ENCODE measurements at regions of chr1 and their contacts with region 1.

Region 1: DNA sequence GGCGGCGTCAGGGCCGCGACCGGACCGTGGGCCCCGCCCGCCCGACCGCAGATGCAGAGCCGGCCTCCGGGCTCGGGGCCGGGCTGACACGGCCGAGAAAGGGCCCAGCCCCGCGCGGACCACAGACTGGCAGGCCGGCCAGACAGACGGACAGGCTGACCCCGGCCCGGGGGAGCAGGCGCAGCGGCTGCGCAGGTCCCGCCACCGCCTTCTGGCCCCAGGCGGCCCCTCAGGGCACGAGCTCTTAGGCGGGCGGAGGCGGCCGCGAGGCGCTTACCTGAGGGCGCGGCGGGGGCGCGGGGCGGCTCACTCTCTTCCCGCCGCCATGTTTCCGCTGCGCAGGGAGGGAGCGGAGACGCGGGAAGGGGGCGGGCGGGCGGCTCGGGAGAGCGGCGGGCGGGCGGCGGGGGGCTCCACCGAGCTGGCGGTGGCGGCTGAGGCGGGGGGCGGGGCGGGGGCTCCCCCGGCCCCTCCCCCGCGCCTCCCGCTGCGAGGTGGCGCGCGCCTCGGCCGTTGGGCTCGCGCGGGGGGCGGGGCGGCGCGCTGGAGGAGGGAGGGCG is at the start of gene SCMH1:
- DNase-seq: peak; percentile 12
- ATAC-seq: peak; percentile 78
- H3K4me3 ChIP-seq: peak within 1 kb of the TSS; percentile 88
- H3K27ac ChIP-seq: peak within 1 kb of the TSS; percentile 82
- H3K4me1 ChIP-seq: peaks cover 7% of the 10 kb centered on the region
- H3K27me3 ChIP-seq: no peaks in the 10 kb centered on the region
- CTCF ChIP-seq: no peak
- POLR2A ChIP-seq: no peak; the same call in 1 of the 2 replicates
- RAD21 ChIP-seq: no peak
- total RNA-seq, gene SCMH1: 9.0 and 9.7 TPM in 2 replicates

Region 2: DNA sequence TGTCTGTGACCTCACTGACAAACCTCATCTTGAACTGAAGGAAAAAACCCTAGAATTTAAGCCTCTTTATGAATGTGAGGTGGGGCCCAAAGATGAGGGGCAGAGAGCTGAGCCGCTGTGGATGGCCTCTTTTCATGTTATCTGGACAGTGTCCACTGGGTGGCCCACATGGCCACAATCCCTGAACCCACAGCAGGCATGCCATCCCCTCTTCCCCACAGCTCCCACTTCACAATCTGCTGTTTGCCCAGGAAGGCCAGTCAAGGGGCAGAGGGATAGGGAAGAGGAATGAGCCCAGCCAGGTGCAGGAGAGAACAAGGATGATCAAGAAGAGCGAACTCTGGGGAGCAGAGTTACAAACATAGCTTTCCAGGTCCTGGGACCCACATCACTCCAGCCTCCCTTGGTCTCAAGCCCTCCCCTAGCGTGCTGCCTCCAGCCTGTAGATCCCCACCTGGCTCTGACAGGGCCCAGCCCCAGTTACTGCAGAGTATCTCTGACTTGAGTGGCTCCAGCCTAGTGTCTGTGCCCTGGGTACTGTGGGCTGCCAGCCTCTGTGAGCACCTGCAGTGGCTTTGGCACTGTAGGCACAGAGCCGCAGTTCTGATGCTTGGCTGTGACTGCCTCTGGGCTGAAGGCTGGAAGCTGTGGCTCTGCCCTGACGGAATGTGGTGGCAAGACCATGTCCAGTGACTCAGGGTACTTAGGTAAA is 218.4 kb before region 1 on chr1:
- CTCF ChIA-PET with region 1: no interaction called
- POLR2A ChIA-PET with region 1: no interaction called
- dilution Hi-C with region 1: no loop called
- in situ Hi-C with region 1: no loop called
- intact Hi-C with region 1: loop called (anchors 1 kb)
- DNase-seq: no peak
- ATAC-seq: peak; percentile 57
- H3K4me3 ChIP-seq: no peak overlapping the region
- H3K27ac ChIP-seq: no peak overlapping the region
- H3K4me1 ChIP-seq: peaks cover 5% of the 10 kb centered on the region
- H3K27me3 ChIP-seq: no peaks in the 10 kb centered on the region
- CTCF ChIP-seq: peak; percentile 40
- POLR2A ChIP-seq: no peak
- RAD21 ChIP-seq: peak; percentile 56

Region 3: DNA sequence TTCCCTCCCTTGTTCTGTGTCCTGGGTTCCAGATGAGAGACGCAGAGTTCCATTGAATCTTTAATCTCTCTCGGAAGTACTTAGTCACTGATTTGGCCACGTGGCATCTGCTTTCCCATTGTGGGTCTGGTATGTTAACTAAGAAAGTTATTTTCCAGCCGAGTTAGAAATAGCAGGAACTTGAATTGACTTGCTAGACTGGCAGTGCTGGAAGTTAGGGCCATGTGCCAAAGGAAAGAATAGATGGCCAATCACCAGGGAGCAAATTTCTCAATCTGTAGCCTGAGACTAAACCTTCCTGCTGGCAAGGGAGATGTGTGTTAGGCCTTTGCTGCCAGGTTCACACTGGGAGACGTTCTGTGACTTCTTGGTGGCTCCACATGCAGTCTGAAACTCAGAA is 196.1 kb before region 1 on chr1:
- CTCF ChIA-PET with region 1: no interaction called
- POLR2A ChIA-PET with region 1: no interaction called
- dilution Hi-C with region 1: no loop called
- in situ Hi-C with region 1: no loop called
- intact Hi-C with region 1: loop called (anchors 5 kb)
- DNase-seq: peak; percentile 38
- ATAC-seq: peak; percentile 24; the same call in 1 of the 2 replicates
- H3K4me3 ChIP-seq: no peak overlapping the region
- H3K27ac ChIP-seq: no peak overlapping the region
- H3K4me1 ChIP-seq: peaks cover 2% of the 10 kb centered on the region; the same call in 1 of the 2 replicates
- H3K27me3 ChIP-seq: no peaks in the 10 kb centered on the region
- CTCF ChIP-seq: no peak
- POLR2A ChIP-seq: no peak
- RAD21 ChIP-seq: no peak

Region 4: DNA sequence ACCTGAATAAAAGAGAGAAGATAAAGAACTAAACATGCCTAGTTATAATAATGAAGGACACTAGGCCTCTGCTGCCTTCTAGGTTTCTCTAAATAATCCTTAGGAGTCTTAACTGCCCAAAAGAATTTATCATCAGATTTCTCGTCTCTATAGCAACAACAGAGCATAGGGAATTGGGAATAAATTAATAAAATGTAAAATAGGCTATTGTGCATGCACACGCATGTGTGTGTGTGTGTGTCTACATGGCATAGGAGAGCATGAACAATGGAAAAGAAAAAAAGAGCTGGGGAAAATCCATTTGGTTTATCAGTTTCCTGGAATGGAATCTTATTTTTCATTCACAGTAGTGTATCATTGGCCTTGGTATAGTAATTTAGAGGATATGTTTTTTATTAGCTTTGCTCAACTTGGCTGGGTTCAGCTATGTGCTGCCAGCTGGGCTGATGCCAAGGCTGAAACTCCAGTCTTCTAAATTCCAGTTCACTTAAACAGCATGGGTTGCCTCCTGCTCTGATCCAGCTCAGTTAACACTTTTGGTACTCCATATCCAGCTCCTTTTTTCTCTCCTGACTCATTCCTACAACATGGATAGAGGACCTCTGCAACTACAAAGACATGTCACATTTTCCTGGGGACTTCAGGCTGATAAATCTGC is 139.8 kb before region 1 on chr1:
- CTCF ChIA-PET with region 1: no interaction called
- POLR2A ChIA-PET with region 1: no interaction called
- dilution Hi-C with region 1: no loop called
- in situ Hi-C with region 1: no loop called
- intact Hi-C with region 1: loop called (anchors 5 kb)
- DNase-seq: peak; percentile 97
- ATAC-seq: peak; percentile 95
- H3K4me3 ChIP-seq: no peak overlapping the region
- H3K27ac ChIP-seq: no peak overlapping the region; the same call in 1 of the 2 replicates
- H3K4me1 ChIP-seq: peaks cover 5% of the 10 kb centered on the region
- H3K27me3 ChIP-seq: no peaks in the 10 kb centered on the region
- CTCF ChIP-seq: no peak
- POLR2A ChIP-seq: no peak
- RAD21 ChIP-seq: no peak

Region 5: DNA sequence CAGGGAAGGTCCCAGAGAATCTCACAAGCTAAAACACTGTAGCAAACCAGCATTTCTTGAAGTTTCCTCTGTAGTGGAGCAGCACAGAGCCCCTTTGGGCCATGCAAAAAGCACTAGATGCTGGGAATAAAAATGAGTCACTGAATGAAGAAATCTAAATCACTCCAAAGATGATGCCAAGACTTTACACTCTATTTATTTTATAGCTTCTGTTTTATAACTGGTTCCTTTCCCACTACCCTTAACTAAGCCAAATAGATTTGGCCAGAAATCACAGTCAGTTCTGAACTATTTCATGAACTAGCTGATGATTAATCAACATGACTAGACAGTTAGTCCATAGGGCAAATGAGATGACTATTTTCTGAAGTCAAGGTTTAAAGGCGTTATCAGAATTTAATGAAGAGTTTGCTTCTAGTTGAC is 89.2 kb before region 1 on chr1:
- CTCF ChIA-PET with region 1: interaction called, 4 read pairs
- POLR2A ChIA-PET with region 1: no interaction called
- dilution Hi-C with region 1: no loop called
- in situ Hi-C with region 1: no loop called
- intact Hi-C with region 1: loop called (anchors 5 kb)
- DNase-seq: peak; percentile 92
- ATAC-seq: peak; percentile 85
- H3K4me3 ChIP-seq: no peak overlapping the region
- H3K27ac ChIP-seq: peak overlapping the region; percentile 66; the same call in 1 of the 2 replicates
- H3K4me1 ChIP-seq: peaks cover 22% of the 10 kb centered on the region
- H3K27me3 ChIP-seq: no peaks in the 10 kb centered on the region
- CTCF ChIP-seq: no peak
- POLR2A ChIP-seq: no peak
- RAD21 ChIP-seq: no peak

Region 6: GRCh38 chr1:41213341-41213740 is 28.5 kb before region 1 on chr1:
- CTCF ChIA-PET with region 1: no interaction called
- POLR2A ChIA-PET with region 1: no interaction called
- dilution Hi-C with region 1: no loop called
- in situ Hi-C with region 1: no loop called
- intact Hi-C with region 1: no loop called
- DNase-seq: no peak
- ATAC-seq: no peak
- H3K4me3 ChIP-seq: no peak overlapping the region
- H3K27ac ChIP-seq: no peak overlapping the region
- H3K4me1 ChIP-seq: no peaks in the 10 kb centered on the region
- H3K27me3 ChIP-seq: no peaks in the 10 kb centered on the region
- CTCF ChIP-seq: no peak
- POLR2A ChIP-seq: no peak
- RAD21 ChIP-seq: no peak

Region 7: GRCh38 chr1:41454406-41455122 is 212.7 kb after region 1 on chr1:
- CTCF ChIA-PET with region 1: no interaction called
- POLR2A ChIA-PET with region 1: no interaction called
- dilution Hi-C with region 1: no loop called
- in situ Hi-C with region 1: no loop called
- intact Hi-C with region 1: no loop called
- DNase-seq: no peak
- ATAC-seq: no peak
- H3K4me3 ChIP-seq: no peak overlapping the region
- H3K27ac ChIP-seq: no peak overlapping the region
- H3K4me1 ChIP-seq: peaks cover 2% of the 10 kb centered on the region; the same call in 1 of the 2 replicates
- H3K27me3 ChIP-seq: peaks cover 16% of the 10 kb centered on the region
- CTCF ChIP-seq: no peak
- POLR2A ChIP-seq: no peak
- RAD21 ChIP-seq: no peak

Region 8: DNA sequence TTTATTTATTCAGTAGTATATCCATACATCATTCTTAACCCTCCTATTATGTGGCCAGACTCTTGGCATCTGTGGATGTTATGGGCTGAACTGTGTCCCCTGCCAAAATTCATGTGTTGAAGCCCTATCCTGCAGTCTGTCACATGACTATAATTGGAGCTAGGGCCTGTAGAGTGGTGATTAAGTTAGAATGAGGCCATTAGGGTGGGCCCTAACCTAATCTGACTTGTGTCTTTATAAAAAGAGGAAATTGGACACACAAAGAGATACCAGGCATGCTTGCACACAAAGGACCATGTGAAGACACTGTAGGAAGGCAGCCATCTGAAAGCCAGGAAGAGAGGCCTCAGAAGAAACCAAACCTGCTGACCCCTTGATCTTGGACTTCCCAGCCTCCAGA is 1207.4 kb after region 1 on chr1:
- CTCF ChIA-PET with region 1: no interaction called
- POLR2A ChIA-PET with region 1: no interaction called
- dilution Hi-C with region 1: no loop called
- in situ Hi-C with region 1: no loop called
- intact Hi-C with region 1: no loop called
- DNase-seq: no peak
- ATAC-seq: no peak
- H3K4me3 ChIP-seq: no peak overlapping the region
- H3K27ac ChIP-seq: no peak overlapping the region
- H3K4me1 ChIP-seq: no peaks in the 10 kb centered on the region
- H3K27me3 ChIP-seq: peaks cover 2% of the 10 kb centered on the region
- CTCF ChIP-seq: no peak
- POLR2A ChIP-seq: no peak
- RAD21 ChIP-seq: no peak